MCF 10A (cell line): ENCODE measurements at regions of chr11 and their contacts with region 1.

Region 1: GRCh38 chr11:10400856-10401255 is 54.2 kb upstream of the AMPD3 start:
- DNase-seq: no peak
- H3K4me3 Mint-ChIP-seq: no peak overlapping the region
- H3K27ac Mint-ChIP-seq: no peak overlapping the region
- H3K4me1 Mint-ChIP-seq: peaks cover 15% of the 10 kb centered on the region
- H3K27me3 Mint-ChIP-seq: no peaks in the 10 kb centered on the region
- CTCF ChIP-seq: no peak

Region 2: GRCh38 chr11:10728789-10729472 is 328.1 kb after region 1 on chr11:
- CTCF ChIA-PET with region 1: interaction called, 15 read pairs
- POLR2A ChIA-PET with region 1: no interaction called
- intact Hi-C with region 1: no loop called
- DNase-seq: no peak
- H3K4me3 Mint-ChIP-seq: no peak overlapping the region
- H3K27ac Mint-ChIP-seq: no peak overlapping the region
- H3K4me1 Mint-ChIP-seq: no peaks in the 10 kb centered on the region
- H3K27me3 Mint-ChIP-seq: peaks cover 17% of the 10 kb centered on the region
- CTCF ChIP-seq: no peak